GM13976 (cell line): ENCODE measurements at regions of chr9 and their contacts with region 1.

Region 1: DNA sequence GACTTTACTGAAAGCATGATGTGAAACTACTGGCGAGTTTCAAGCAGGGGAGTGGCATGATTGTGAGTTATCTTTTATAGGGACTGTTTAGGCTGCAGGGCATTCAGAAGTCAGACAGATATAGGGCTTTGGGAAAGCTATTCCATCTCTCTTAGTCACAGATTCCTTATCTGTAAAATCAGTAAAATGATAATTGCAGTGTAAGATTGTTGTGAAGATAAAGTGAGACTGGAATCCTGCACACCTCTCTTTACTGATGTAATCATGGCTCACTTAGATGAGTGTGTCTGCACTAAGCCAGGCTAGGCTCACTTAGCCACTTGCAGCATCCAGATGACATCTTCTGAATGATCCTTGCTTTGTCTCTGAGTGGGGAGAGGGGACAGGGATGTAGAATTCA is 81.8 kb upstream of the MAMDC2 start:
- DNase-seq: no peak
- CTCF ChIP-seq: no peak

Region 2: GRCh38 chr9:70111042-70111602 is 149.3 kb after region 1 on chr9:
- in situ Hi-C with region 1: loop called (anchors 10 kb)
- DNase-seq: peak; percentile 35
- CTCF ChIP-seq: peak; percentile 90